CD8-positive, alpha-beta T cell (primary cell): ENCODE measurements at regions of chr5 and their contacts with region 1.

Region 1: GRCh38 chr5:129094087-129094923 is at the start of gene ISOC1:
- DNase-seq: peak; percentile 83 to 97 (median 90)
- ATAC-seq: peak; percentile 91
- H3K4me3 ChIP-seq: peak within 1 kb of the TSS; percentile 86 to 88
- H3K4me3 Mint-ChIP-seq: peak within 1 kb of the TSS; percentile 91
- H3K27ac ChIP-seq: peak within 1 kb of the TSS; percentile 74
- H3K27ac Mint-ChIP-seq: peak within 1 kb of the TSS; percentile 86
- H3K4me1 ChIP-seq: peaks cover 35% of the 10 kb centered on the region
- H3K4me1 Mint-ChIP-seq: peaks cover 37% of the 10 kb centered on the region
- H3K27me3 ChIP-seq: no peaks in the 10 kb centered on the region
- H3K27me3 Mint-ChIP-seq: peaks cover 15% of the 10 kb centered on the region
- CTCF ChIP-seq: peak; percentile 41
- total RNA-seq, gene ISOC1: 9.7 to 9.8 TPM

Region 2: GRCh38 chr5:127517480-127518318 is 1576.6 kb before region 1 on chr5 and contains the start of gene PRRC1:
- CTCF ChIA-PET with region 1: no interaction called
- POLR2A ChIA-PET with region 1: no interaction called
- intact Hi-C with region 1: loop called (anchors 2 to 5 kb)
- DNase-seq: peak; percentile 53 to 90 (median 81)
- ATAC-seq: peak; percentile 96
- H3K4me3 ChIP-seq: peak within 1 kb of the TSS; percentile 91 to 98
- H3K4me3 Mint-ChIP-seq: peak within 1 kb of the TSS; percentile 90
- H3K27ac ChIP-seq: peak within 1 kb of the TSS; percentile 75 to 76
- H3K27ac Mint-ChIP-seq: peak within 1 kb of the TSS; percentile 80
- H3K4me1 ChIP-seq: peaks cover 11% of the 10 kb centered on the region
- H3K4me1 Mint-ChIP-seq: peaks cover 37% of the 10 kb centered on the region
- H3K27me3 ChIP-seq: no peaks in the 10 kb centered on the region
- H3K27me3 Mint-ChIP-seq: peaks cover 8% of the 10 kb centered on the region
- CTCF ChIP-seq: no peak
- total RNA-seq, gene PRRC1: 30.4 to 37.3 TPM